Activated CD4-positive, alpha-beta memory T cell treated with anti-CD3 and anti-CD28 coated beads for 36 hours (primary cell): ENCODE measurements at regions of chr3 and their contacts with region 1.

Region 1: DNA sequence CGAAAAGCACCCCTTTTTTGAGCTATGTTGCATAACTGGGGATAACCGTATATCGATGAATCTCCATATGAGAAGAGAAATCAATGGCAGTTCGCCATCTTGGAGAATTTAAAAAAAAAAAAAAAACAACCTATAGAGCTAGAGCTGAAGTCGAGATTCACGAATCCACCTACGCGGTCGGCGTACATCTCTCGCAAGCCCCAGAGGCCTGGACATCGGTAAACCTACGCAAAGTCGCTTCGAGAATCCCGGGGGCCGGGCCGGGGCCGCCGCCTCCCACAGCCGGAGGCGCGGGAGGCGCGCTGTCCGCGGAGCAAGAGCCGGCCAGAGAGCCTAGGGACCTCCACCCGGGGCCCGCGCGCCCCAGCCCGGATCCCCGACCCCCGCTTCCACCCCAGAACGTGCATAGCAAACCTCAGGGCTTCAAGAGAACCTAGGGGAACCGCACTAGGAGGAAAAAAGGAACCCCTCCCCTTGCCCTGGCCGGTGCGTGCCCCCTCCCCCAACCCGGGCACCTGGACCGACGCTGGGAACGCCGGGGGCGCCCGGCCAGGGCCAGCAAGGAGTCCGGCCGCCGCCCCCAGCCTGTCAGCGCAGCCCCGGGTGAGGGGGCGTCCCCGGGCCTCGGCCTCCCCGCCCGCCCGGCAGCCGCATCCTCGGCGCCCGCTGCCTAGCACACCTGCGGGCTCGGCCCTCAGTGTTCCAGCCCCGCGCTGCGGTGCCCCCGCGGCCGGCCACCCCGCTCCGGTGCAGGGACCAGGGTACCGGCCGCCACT is 567 bp downstream of the PFN2 start:
- DNase-seq: peak; percentile 83
- H3K4me3 Mint-ChIP-seq: peak overlapping the region; percentile 77
- H3K27ac Mint-ChIP-seq: no peak overlapping the region
- H3K4me1 Mint-ChIP-seq: peaks cover 11% of the 10 kb centered on the region
- H3K27me3 Mint-ChIP-seq: peaks cover 21% of the 10 kb centered on the region

Region 2: GRCh38 chr3:149936812-149937233 is 33.3 kb before region 1 on chr3:
- CTCF ChIA-PET with region 1: interaction called, 16 read pairs
- POLR2A ChIA-PET with region 1: no interaction called
- intact Hi-C with region 1: loop called (anchors 1 kb)
- DNase-seq: peak; percentile 50
- H3K4me3 Mint-ChIP-seq: no peak overlapping the region
- H3K27ac Mint-ChIP-seq: no peak overlapping the region
- H3K4me1 Mint-ChIP-seq: peaks cover 19% of the 10 kb centered on the region
- H3K27me3 Mint-ChIP-seq: no peaks in the 10 kb centered on the region

Region 3: DNA sequence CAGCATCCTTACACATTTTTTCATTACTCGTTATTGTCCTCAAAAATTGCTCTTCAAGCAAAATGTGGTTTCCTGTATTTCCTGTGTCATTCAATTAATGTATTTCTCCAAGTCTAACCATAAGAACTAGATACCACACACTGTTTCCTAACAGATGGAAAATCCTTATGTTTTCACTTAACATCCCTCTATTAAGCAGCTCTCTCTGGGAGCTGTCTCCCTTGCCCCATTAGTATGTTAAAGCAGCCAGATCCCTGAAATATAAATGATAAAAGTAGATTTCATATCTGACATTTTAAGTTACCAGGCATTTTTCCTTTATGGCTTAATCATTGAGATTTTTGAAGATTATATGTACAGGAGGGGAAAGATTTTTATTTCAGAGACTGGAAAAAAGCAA is 15.3 kb before region 1 on chr3:
- CTCF ChIA-PET with region 1: interaction called, 19 read pairs
- POLR2A ChIA-PET with region 1: no interaction called
- intact Hi-C with region 1: no loop called
- DNase-seq: no peak
- H3K4me3 Mint-ChIP-seq: no peak overlapping the region
- H3K27ac Mint-ChIP-seq: no peak overlapping the region
- H3K4me1 Mint-ChIP-seq: peaks cover 22% of the 10 kb centered on the region
- H3K27me3 Mint-ChIP-seq: no peaks in the 10 kb centered on the region

Region 4: DNA sequence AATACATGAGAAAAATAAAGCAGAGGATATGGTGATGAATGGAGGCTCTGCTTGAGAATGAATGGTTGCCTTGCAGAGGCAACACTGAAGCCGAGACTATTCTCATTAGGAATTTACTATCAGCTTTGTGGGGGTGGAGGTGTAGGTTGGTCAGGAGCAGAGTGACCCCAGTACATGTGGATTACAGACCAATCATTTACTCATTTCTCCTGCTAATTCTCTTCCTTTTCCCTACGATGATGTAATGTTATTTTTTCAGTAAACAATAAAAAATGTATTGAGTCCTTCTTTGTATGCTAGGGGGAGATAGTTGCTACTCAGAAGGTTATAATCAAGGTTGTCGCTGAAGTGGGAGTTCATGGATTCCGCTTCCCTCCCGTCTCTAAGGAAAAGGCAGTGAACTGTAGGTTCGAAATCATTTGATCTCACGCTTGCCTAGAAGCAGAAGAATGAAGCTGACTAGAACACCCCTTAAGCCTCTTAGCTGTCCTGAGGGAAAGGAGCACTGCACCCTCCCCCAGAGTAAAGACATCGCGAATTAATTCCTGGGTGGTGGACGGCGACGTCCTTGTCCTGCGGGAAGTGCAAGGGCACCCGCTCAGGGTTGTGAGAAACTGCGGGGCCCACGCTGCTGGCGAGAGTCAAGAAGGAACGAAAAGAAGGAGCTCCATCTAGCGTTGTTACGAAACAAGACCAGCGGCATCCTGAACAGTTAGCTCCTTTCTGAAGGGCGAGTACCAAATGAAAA is 213.7 kb after region 1 on chr3:
- CTCF ChIA-PET with region 1: interaction called, 108 read pairs
- POLR2A ChIA-PET with region 1: no interaction called
- intact Hi-C with region 1: loop called (anchors 1 kb)
- DNase-seq: peak; percentile 64
- H3K4me3 Mint-ChIP-seq: no peak overlapping the region
- H3K27ac Mint-ChIP-seq: no peak overlapping the region
- H3K4me1 Mint-ChIP-seq: no peaks in the 10 kb centered on the region
- H3K27me3 Mint-ChIP-seq: peaks cover 3% of the 10 kb centered on the region

Region 5: GRCh38 chr3:150216041-150216811 is 246.1 kb after region 1 on chr3:
- CTCF ChIA-PET with region 1: interaction called, 32 read pairs
- POLR2A ChIA-PET with region 1: no interaction called
- intact Hi-C with region 1: loop called (anchors 1 kb)
- DNase-seq: no peak
- H3K4me3 Mint-ChIP-seq: no peak overlapping the region
- H3K27ac Mint-ChIP-seq: no peak overlapping the region
- H3K4me1 Mint-ChIP-seq: peaks cover 1% of the 10 kb centered on the region
- H3K27me3 Mint-ChIP-seq: peaks cover 23% of the 10 kb centered on the region